Posterior cingulate gyrus (tissue), 11 donors: ENCODE measurements at regions of chr12 and their contacts with region 1.

Region 1: GRCh38 chr12:117587631-117588287 is 226.3 kb upstream of the NOS1 start:
- DNase-seq: peak in 6 of 10 donors; percentile 13 to 87 (median 50)

Region 2: DNA sequence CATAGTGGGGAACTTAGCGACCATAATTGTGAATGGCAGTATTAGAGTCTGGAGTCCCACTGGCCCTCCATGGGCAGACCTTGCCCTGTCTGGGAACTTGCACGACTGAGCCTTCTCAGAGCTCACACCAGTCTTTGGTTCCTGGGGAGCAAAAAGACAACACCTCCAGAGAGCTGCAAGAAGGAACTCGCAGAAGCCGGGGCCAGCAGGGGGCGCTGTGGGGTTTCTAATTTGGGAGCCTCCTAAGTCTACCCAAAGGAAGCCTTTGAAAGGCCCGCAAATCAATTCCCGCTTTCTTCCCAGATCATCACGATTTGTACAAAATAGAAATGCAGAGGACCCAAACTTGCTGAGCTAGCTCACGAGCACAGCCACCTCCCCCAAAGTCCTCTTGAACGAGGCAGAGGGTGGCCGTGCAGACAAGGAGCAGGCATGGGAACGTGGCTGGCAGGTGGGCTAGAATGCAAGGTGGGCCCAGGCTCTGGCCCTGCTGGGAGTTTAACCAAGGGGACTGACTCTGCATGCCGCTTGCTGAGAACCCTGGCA is 351.2 kb before region 1 on chr12:
- intact Hi-C with region 1: loop called (anchors 5 kb)
- DNase-seq: peak; percentile 73 to 99 (median 96)

Region 3: DNA sequence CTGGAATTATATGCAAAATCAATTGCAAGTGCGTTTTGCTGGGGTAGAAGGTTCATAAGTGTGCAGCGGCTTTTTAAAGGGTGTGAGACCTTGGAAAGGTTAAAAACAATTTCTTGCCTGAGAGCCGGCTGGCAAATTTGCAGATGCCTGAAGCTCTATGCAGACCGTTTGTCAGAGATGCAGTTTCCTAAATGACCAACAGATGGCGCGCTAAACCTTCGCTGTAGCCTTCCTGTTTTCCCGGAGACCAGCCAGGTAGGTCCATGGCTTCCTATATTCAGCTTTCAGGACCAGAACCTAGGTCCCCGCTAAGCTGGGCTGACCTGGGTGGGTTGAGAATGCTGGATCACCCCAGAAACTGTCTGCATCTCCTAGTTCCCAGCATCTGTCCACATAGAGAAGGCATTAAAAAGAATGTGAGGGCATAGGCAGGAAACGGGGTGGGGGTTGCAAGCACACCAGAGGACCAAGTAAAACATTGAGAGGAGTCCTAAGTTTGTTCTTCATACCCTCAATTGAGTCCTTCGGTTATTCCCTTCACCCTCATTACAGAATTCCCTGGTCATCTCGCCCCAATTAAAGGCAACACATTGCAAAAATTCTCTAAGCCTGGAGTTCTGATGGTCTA is 220.6 kb before region 1 on chr12:
- intact Hi-C with region 1: loop called (anchors 1 kb)
- DNase-seq: peak; percentile 38 to 95 (median 87)

Region 4: DNA sequence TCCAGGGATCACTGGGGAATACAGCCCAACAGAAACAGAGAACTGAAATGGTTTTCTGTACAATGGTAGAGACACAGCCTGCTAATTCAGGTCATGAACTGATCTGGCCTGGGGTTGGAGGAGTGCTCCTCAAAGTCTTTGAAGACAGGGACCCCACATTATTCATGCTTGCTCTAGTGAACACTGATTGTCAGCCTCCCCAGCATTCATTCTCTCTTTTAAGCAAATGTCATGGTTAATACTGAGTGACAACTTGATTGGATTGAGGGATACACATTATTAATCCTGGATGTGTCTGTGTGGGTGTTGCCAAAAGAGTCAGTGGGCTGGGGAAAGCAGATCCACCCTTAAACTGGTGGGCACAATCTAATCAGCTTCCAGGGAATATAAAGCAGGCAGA is 62.0 kb after region 1 on chr12:
- intact Hi-C with region 1: no loop called
- DNase-seq: no peak

Region 5: DNA sequence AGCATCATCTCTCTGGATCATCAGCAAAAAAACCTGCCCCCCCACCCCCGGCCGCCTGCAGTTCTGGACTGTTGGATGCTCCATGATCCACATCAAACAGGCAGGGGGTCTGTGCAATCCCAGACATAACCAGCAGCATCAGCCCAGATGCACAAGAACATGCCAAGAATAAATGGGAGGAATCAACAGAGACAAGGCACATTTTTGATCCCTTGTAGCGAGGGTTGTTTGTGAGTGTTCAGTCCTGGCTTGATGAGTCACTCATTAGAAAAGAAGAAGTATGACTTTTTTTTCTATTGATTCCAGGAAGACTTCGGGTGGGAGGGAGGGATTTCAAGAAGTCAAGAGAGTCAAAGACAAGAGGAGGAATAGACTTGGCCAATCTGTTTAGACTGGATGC is 136.8 kb after region 1 on chr12:
- intact Hi-C with region 1: no loop called
- DNase-seq: no peak